Adrenal gland (tissue), 19 donors: ENCODE measurements at regions of chr16 and their contacts with region 1.

Region 1: DNA sequence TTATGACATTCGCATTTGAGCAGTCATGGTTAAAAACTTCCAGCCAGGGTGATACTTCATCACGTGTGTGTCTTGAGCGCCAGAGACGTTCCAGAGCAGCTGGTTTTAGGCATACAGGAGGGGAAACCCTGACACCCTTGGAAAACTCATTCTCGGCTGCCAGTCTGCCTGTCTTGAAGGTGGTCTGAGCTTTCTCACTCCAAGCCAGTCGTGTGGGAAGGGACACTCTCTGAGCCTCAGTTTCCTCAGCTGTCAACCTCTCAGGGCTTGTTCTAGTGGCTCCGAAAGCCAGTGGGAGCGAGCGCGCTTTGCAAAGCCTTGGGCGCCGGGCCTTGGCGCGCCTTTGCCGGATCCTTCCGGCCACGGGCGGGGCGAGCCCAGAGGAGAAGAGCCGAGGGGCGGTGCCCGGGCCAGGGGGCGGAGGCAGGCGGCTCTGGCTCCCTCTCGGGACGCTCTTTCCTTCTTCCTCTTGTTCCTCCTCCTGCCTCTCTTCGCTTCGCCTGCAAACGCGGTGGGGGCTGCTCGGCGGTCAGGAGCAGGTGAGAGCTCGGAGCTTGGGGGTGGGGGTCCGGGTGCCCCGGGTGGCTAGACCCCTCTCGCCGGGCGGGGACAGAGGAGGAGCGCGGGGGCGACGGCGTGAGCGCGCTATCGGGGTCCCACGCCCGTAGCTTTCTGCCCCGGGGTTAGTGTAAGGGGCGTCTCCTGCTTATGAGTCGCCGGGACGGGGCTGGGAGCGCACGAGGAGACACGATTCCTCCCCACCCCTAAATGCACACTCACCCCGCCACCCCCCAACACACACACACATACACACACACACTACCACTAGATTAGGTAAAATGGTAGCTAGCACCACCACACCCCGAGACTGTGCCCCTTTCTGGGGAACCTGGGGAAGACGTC is at the start of gene LDAF1:
- DNase-seq: peak; percentile 78 to 88 (median 85)
- H3K4me3 ChIP-seq: peak within 1 kb of the TSS; percentile 38 to 82 (median 67)
- H3K27ac ChIP-seq: peak within 1 kb of the TSS in 4 of 5 donors; percentile 10 to 82 (median 62)
- H3K4me1 ChIP-seq: peaks cover 47 to 52% of the 10 kb centered on the region in 2 donors
- H3K27me3 ChIP-seq: no peaks in the 10 kb centered on the region
- CTCF ChIP-seq: no peak
- POLR2A ChIP-seq: peak; percentile 33 to 62
- total RNA-seq, gene LDAF1: 4.2 to 194 (median 81.1) TPM

Region 2: DNA sequence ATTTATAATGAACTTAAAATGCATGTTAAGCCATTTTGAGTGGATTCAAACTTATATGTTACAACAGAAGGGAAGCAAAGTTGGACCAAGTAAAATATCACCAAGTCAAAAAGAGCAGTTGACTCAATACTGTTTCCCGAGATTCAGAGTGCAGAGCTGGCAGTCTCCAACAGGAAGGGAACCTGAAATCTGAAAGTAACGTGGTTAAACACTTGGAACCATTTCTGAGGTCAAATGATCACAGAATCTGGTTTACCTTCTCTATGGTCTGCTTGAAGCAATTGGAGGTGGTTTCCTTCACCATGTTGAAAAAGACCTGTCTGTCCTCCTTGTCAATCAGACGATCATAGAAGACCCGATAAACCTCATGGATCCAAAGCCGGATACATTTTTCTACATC is 171.4 kb before region 1 on chr16:
- intact Hi-C with region 1: no loop called
- DNase-seq: no peak
- H3K4me3 ChIP-seq: no peak overlapping the region
- H3K27ac ChIP-seq: no peak overlapping the region
- H3K4me1 ChIP-seq: no peaks in the 10 kb centered on the region
- H3K27me3 ChIP-seq: no peaks in the 10 kb centered on the region
- CTCF ChIP-seq: no peak
- POLR2A ChIP-seq: no peak

Region 3: GRCh38 chr16:21300309-21301167 is 142.1 kb after region 1 on chr16:
- intact Hi-C with region 1: loop called (anchors 10 kb)
- DNase-seq: peak; percentile 97 to 99 (median 98)
- H3K4me3 ChIP-seq: peak overlapping the region; percentile 39 to 73 (median 48)
- H3K27ac ChIP-seq: peak overlapping the region in 4 of 5 donors; percentile 17 to 82 (median 70)
- H3K4me1 ChIP-seq: no peaks in the 10 kb centered on the region
- H3K27me3 ChIP-seq: peaks cover 10% of the 10 kb centered on the region
- CTCF ChIP-seq: peak; percentile 65 to 93 (median 90)
- POLR2A ChIP-seq: peak in 1 of 2 donors; percentile 48

Region 4: DNA sequence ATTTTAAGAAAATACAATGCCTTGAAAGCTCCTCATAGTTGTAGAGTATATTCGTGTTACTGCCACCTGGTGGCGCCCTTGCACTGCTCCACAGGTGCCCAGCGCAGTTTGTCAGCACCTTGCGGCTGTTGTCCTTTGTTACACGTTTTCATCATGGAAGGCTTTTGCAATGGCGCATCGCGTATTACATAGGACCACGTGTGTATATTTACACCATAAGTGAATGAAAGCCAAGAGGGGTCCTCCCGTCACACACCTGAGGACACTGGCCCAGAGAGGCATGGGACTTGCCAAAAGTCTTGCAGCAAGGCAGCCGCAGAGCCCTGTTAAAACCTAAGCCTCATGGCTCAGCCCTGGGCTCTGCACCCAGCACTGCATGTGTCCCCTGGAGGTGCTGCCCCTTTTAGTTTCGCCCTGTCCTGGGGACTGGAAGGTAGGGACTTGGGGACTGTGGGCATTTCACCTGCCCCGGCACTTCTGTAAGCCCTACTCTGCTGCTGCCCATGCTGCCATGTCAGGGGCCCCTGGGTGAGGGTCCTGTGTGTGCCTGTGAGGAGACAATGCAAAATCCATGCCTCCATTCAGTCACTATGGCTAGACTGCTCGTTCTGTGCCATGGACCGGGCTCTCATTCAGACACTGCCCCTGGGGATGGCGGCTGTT is 1163.0 kb after region 1 on chr16:
- intact Hi-C with region 1: loop called in 1 of 2 experiments (anchors 10 kb)
- DNase-seq: peak; percentile 62 to 92 (median 82)
- H3K4me3 ChIP-seq: no peak overlapping the region
- H3K27ac ChIP-seq: peak overlapping the region in 1 of 5 donors; percentile 13
- H3K4me1 ChIP-seq: peaks cover 9 to 12% of the 10 kb centered on the region in 2 donors
- H3K27me3 ChIP-seq: no peaks in the 10 kb centered on the region
- CTCF ChIP-seq: peak; percentile 91 to 96 (median 94)
- POLR2A ChIP-seq: no peak